ENCODE measurements at regions of chr11 and their contacts with region 1.

Region 1: GRCh38 chr11:72091005-72091691 is 10.5 kb downstream of the LRRC51 start:
- DNase-seq: peak; percentile 82
- ATAC-seq: peak; percentile 90
- H3K4me3 Mint-ChIP-seq: no peak overlapping the region
- H3K27ac Mint-ChIP-seq: no peak overlapping the region
- H3K4me1 Mint-ChIP-seq: peaks cover 13% of the 10 kb centered on the region
- H3K27me3 Mint-ChIP-seq: no peaks in the 10 kb centered on the region

Region 2: DNA sequence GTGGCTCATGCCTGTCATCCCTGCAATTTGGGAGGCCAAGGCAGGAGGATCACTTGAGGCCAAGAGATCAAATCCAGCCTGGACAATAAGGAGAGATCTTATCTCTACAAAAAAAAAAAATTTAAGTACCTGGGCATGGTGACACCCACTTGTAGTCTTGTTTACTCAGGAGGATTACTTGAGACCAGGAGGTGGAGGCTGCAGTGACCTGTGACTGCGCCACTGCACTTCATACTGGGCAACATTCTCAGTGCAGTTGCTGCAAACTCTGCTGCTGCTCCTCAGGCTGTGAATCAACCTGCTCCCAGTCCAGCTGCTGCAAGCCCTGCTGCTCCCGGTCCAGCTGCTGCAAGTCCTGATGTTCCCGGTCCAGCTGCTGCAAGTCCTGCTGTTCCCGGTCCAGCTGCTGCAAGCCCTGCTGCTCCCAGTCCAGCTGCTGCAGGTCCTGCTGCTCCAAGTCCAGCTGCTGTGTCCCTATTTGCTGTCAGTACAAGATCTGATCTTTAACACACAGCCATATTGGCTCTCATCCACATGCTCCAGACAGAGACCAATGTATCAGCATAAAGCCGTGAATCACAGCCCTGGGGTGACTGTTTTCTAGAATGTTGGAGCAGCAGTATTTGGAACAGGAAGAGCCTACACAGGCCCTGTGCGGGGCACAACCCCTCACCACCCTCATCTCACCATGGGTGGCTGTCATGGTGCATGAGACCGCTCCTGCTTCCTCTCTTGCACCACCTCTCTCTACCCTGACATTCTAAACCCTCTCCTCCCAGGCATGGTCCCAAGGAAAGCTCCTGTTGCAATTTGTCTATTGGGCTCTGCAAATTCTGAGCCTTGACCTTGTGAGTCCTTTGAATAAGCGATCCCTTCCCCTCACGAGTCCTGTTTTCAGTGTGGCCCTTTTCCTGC is 522.5 kb before region 1 on chr11:
- CTCF ChIA-PET with region 1: no interaction called
- POLR2A ChIA-PET with region 1: no interaction called
- intact Hi-C with region 1: no loop called
- DNase-seq: no peak
- ATAC-seq: no peak
- H3K4me3 Mint-ChIP-seq: no peak overlapping the region
- H3K27ac Mint-ChIP-seq: no peak overlapping the region
- H3K4me1 Mint-ChIP-seq: no peaks in the 10 kb centered on the region
- H3K27me3 Mint-ChIP-seq: peaks cover 29% of the 10 kb centered on the region

Region 3: DNA sequence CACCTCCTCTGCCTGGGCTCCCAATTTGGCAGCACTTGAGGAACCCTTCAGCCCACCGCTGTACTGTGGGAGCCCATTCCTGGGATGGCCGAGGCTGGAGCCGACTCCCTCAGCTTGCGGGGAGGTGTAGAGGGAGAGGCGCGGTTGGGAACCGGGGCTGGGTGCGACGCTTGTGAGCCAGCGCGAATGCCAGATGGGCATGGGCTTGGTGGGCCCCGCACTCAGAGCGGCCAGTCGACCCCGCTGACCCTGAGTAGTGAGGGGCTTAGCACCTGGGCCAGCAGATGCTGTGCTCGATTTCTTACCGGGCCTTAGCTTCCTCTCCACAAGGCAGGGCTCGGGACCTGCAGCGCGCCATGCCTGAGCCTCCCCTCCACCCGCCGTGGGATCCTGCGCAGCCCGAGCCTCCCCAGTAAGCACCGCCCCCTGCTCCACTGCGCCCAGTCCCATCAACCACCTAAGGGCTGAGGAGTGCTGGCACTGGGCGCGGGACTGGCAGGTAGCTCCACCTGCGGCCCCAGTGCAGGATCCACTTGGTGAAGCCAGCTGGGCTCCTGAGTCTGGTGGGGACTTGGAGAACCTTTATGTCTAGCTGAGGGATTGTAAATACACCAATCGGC is 316.4 kb before region 1 on chr11:
- CTCF ChIA-PET with region 1: no interaction called
- POLR2A ChIA-PET with region 1: no interaction called
- intact Hi-C with region 1: no loop called
- DNase-seq: no peak
- ATAC-seq: no peak
- H3K4me3 Mint-ChIP-seq: no peak overlapping the region
- H3K27ac Mint-ChIP-seq: no peak overlapping the region
- H3K4me1 Mint-ChIP-seq: no peaks in the 10 kb centered on the region
- H3K27me3 Mint-ChIP-seq: peaks cover 5% of the 10 kb centered on the region

Region 4: GRCh38 chr11:71977743-71978418 is 113.3 kb before region 1 on chr11:
- CTCF ChIA-PET with region 1: interaction called, 22 read pairs
- POLR2A ChIA-PET with region 1: no interaction called
- intact Hi-C with region 1: loop called (anchors 1 to 5 kb)
- DNase-seq: peak; percentile 69
- ATAC-seq: peak; percentile 63
- H3K4me3 Mint-ChIP-seq: no peak overlapping the region
- H3K27ac Mint-ChIP-seq: no peak overlapping the region
- H3K4me1 Mint-ChIP-seq: peaks cover 2% of the 10 kb centered on the region
- H3K27me3 Mint-ChIP-seq: no peaks in the 10 kb centered on the region

Region 5: GRCh38 chr11:72040726-72041441 is 50.3 kb before region 1 on chr11:
- CTCF ChIA-PET with region 1: interaction called, 11 read pairs
- POLR2A ChIA-PET with region 1: no interaction called
- intact Hi-C with region 1: no loop called
- DNase-seq: peak; percentile 86
- ATAC-seq: peak; percentile 76
- H3K4me3 Mint-ChIP-seq: no peak overlapping the region
- H3K27ac Mint-ChIP-seq: no peak overlapping the region
- H3K4me1 Mint-ChIP-seq: peaks cover 35% of the 10 kb centered on the region
- H3K27me3 Mint-ChIP-seq: no peaks in the 10 kb centered on the region

Region 6: DNA sequence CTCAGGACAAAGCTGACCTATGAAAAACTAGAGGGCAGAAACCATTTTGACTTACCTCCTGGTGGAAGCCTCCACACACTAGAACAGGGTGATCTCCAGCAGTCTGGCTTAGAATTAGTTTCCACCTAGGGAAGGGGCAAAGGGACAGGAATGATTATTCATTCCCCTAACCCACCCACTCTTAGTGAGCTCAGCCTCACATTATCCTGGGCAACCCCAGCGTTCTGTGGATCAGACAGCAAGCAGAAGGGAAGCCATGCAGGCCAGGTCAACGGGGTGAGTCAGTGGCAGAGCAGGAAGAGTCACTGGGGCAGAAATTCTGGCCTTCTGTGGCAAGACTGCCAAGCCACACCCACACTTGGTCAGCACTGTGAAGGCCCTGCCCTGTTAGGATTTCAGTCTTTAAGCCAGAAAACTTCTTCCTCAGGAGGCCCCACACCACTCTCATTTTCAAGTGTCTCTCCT is 21.3 kb before region 1 on chr11:
- CTCF ChIA-PET with region 1: interaction called, 4 read pairs
- POLR2A ChIA-PET with region 1: no interaction called
- intact Hi-C with region 1: loop called in 1 of 2 experiments (anchors 1 kb)
- DNase-seq: peak; percentile 22
- ATAC-seq: peak; percentile 65
- H3K4me3 Mint-ChIP-seq: no peak overlapping the region
- H3K27ac Mint-ChIP-seq: peak overlapping the region; percentile 35
- H3K4me1 Mint-ChIP-seq: peaks cover 46% of the 10 kb centered on the region
- H3K27me3 Mint-ChIP-seq: no peaks in the 10 kb centered on the region

Region 7: DNA sequence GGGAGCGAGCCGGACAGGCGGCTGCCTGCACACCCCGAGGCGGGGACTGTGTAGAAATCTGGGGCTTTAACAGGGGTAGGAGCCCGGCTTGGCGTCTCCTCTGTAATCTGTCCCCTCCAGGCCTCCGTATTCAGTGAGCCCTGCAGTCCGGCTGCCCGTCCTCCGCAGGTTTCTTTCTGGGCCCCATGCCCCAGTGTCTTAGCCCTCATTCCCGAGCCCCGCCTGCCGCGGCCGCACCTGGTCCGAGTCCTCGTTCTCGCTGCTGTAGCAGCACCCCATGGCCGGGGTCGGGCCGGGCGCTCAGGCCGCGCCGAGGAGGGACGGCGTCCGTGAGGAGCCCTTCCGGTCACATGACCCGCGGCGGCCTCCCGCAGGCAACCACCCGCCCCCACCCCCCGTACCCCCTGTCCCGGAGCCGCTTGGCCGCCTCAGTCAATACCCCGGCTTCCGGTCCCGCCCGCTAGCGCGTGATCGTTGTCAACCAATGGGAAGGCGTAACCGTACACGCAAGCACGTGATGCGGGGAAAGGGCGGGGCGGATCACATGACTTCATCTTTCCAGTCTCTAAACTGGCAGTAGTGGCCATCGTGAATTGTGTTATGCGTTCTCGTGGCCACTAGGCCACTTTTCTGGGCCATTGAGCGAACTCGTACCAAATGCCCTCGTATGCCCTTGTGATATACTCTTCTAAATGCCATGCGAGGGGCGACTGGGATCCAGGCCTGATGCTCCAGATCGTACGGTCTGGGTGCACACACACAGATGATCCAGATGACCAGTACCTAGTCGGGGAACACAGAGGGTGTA is 12.0 kb after region 1 on chr11 and contains the start of gene LAMTOR1:
- CTCF ChIA-PET with region 1: interaction called, 27 read pairs
- POLR2A ChIA-PET with region 1: no interaction called
- intact Hi-C with region 1: no loop called
- DNase-seq: peak; percentile 99
- ATAC-seq: peak; percentile 98
- H3K4me3 Mint-ChIP-seq: peak within 1 kb of the TSS; percentile 97
- H3K27ac Mint-ChIP-seq: peak within 1 kb of the TSS; percentile 95
- H3K4me1 Mint-ChIP-seq: peaks cover 38% of the 10 kb centered on the region
- H3K27me3 Mint-ChIP-seq: no peaks in the 10 kb centered on the region
- total RNA-seq, gene LAMTOR1: 50.7 to 52.2 TPM

Measured in activated CD4-positive, alpha-beta T cell treated with anti-CD3 and anti-CD28 coated beads for 36 hours (primary cell).